ENCODE measurements at regions of chr3 and their contacts with region 1.

Region 1: GRCh38 chr3:152258448-152259393 is 10.0 kb upstream of the MBNL1 start:
- DNase-seq: peak; percentile 89
- H3K4me3 Mint-ChIP-seq: peak overlapping the region; percentile 79
- H3K27ac Mint-ChIP-seq: peak overlapping the region; percentile 97
- H3K4me1 Mint-ChIP-seq: peaks cover 75% of the 10 kb centered on the region
- H3K27me3 Mint-ChIP-seq: no peaks in the 10 kb centered on the region

Region 2: DNA sequence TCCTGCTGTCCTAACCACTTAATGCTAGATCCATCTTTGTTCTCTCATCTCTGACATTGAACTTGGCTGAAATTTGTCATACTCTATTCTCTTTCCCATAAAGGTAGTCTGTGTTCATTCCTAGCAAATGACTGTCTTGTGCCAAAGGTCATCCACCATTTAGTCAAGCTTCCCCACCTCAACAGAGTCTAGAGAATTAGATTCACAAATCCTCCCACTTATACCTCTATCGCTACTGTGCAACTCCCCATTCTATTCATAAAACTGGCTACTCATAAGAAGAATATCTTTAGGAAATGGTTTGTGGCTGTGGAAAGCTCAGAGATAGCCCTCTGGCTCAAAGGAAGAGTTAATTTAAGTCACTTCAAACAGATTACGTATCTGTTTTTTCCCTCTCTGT is 49.7 kb before region 1 on chr3:
- intact Hi-C with region 1: loop called (anchors 1 kb)
- DNase-seq: peak; percentile 55
- H3K4me3 Mint-ChIP-seq: peak overlapping the region; percentile 61
- H3K27ac Mint-ChIP-seq: peak overlapping the region; percentile 84
- H3K4me1 Mint-ChIP-seq: peaks cover 66% of the 10 kb centered on the region
- H3K27me3 Mint-ChIP-seq: no peaks in the 10 kb centered on the region

Measured in activated CD4-positive, alpha-beta T cell treated with anti-CD3 and anti-CD28 coated beads, Interleukin-2, amount 10 ng/mL, durations not matched to agents 24 days and 14 days (primary cell).